Activated CD4-positive, alpha-beta memory T cell treated with anti-CD3 and anti-CD28 coated beads for 36 hours (primary cell): ENCODE measurements at regions of chr12 and their contacts with region 1.

Region 1: GRCh38 chr12:25208554-25208953 is 13.5 kb downstream of the ETFRF1 start:
- DNase-seq: no peak
- H3K4me3 Mint-ChIP-seq: no peak overlapping the region
- H3K27ac Mint-ChIP-seq: no peak overlapping the region
- H3K4me1 Mint-ChIP-seq: no peaks in the 10 kb centered on the region
- H3K27me3 Mint-ChIP-seq: no peaks in the 10 kb centered on the region

Region 2: DNA sequence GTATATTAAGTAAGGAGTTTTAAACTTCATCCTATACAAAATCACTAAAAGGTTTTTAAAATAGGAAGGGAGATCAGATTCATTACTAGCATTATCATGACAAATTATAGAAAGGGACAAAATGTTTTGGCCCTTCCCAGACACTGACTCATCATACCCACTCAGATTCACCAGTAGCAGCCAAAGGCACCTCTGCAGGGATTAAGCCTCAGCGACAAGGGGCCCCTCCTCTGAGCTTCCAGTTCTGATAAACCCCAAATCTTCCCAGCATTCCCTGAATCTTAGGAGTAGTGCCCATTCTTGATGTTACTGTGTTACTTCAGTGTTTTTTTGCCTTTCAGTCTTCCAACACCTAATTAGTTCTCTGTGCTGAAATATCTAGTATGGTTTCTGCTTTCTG is 27.6 kb after region 1 on chr12:
- CTCF ChIA-PET with region 1: interaction called, 8 read pairs
- POLR2A ChIA-PET with region 1: no interaction called
- intact Hi-C with region 1: loop called (anchors 2 kb)
- DNase-seq: no peak
- H3K4me3 Mint-ChIP-seq: no peak overlapping the region
- H3K27ac Mint-ChIP-seq: no peak overlapping the region
- H3K4me1 Mint-ChIP-seq: peaks cover 18% of the 10 kb centered on the region
- H3K27me3 Mint-ChIP-seq: no peaks in the 10 kb centered on the region